ENCODE measurements at regions of chr16 and their contacts with region 1.

Region 1: GRCh38 chr16:30429678-30430427 is at the start of gene DCTPP1:
- DNase-seq: peak; percentile 97
- H3K4me3 Mint-ChIP-seq: no peak within 1 kb of the TSS
- H3K27ac Mint-ChIP-seq: no peak within 1 kb of the TSS
- H3K4me1 Mint-ChIP-seq: peaks cover 39% of the 10 kb centered on the region
- H3K27me3 Mint-ChIP-seq: no peaks in the 10 kb centered on the region
- total RNA-seq, gene DCTPP1: 51.3 to 51.4 TPM

Region 2: DNA sequence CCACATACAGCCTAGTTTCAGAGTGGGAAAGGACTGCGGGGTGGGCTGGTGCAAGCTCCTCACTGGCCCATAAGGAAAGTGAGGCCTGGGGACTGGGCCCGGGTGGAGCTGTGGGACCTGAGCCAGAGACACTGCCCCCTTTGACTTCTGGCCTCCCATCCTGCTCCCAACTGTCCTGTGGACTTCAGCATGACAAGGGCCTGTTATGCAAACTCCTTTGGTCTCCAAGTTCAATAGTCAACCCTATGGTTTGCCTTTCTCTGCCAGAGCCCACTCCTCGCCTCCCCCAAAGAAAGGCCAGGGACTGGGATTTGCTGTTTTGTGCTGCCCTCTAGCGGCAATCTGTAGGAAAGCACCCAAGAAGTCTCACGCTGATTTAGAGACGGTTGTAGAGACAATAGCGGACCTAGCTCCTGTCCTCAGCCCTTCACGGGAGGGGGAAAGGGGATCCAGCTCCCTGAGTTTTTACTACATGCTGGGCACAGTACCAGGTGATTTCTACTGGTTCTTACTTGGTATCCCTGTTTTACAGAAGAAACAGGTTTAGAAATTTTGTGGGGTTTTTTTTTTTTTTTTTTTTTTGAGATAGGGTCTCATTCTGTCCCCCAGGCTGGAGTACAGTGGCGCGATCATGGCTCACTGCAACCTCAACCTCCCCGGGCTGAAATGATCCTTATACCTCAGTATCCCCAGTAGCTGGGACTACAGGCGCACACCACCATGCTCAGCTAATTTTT is 397.6 kb before region 1 on chr16:
- CTCF ChIA-PET with region 1: no interaction called
- POLR2A ChIA-PET with region 1: no interaction called
- DNase-seq: peak; percentile 72
- H3K4me3 Mint-ChIP-seq: no peak overlapping the region
- H3K27ac Mint-ChIP-seq: no peak overlapping the region
- H3K4me1 Mint-ChIP-seq: peaks cover 25% of the 10 kb centered on the region
- H3K27me3 Mint-ChIP-seq: peaks cover 45% of the 10 kb centered on the region

Region 3: DNA sequence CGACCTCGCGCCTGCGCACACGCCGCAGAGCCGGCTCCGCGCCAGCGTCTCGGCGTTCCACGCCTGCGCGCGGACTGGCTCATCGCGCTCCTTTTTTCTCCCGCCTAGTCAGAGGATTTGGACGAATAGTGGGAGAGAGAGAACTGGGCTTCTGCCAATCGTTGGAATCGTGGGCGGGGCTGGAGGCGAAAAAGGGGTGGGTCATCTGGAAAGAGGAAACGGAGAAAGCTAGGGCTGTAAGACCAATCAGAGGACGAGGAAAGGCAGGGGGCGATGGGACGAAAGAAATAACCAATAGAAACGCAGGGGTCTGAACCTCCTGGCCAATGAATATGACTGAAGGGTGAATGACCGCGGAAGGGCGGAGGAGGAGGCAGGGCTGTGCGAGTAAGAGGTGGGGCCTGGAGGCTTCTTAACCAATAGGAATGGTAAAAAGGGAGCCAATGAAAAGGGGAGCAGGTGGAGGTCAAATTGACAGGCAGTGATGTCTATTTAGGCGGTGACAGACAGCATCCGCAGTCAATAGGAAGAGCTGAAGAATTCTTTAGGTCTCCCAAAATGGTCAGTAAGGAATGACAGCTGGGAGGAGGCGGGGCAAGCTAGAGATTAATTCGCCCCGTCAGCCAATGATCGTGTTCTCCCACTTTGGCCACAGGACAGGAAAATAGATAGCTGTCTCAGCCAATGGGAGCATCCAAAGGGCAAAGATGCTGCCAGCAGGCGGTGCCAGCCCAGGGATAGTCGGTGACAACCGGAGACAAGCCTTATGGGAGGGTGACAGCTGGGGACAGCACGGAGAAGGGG is 59.2 kb before region 1 on chr16 and contains the start of gene TBC1D10B:
- CTCF ChIA-PET with region 1: interaction called, 10 read pairs
- POLR2A ChIA-PET with region 1: no interaction called
- DNase-seq: peak; percentile 100
- H3K4me3 Mint-ChIP-seq: peak within 1 kb of the TSS; percentile 86
- H3K27ac Mint-ChIP-seq: peak within 1 kb of the TSS; percentile 90
- H3K4me1 Mint-ChIP-seq: peaks cover 41% of the 10 kb centered on the region
- H3K27me3 Mint-ChIP-seq: no peaks in the 10 kb centered on the region
- total RNA-seq, gene TBC1D10B: 69.2 TPM

Region 4: GRCh38 chr16:30445408-30446202 is 15.8 kb after region 1 on chr16 and contains the start of gene SEPHS2:
- CTCF ChIA-PET with region 1: interaction called, 27 read pairs
- POLR2A ChIA-PET with region 1: interaction called, 25 read pairs
- DNase-seq: peak; percentile 97
- H3K4me3 Mint-ChIP-seq: peak within 1 kb of the TSS; percentile 89
- H3K27ac Mint-ChIP-seq: peak within 1 kb of the TSS; percentile 89
- H3K4me1 Mint-ChIP-seq: peaks cover 56% of the 10 kb centered on the region
- H3K27me3 Mint-ChIP-seq: no peaks in the 10 kb centered on the region
- total RNA-seq, gene SEPHS2: 56.3 to 57.8 TPM

Region 5: DNA sequence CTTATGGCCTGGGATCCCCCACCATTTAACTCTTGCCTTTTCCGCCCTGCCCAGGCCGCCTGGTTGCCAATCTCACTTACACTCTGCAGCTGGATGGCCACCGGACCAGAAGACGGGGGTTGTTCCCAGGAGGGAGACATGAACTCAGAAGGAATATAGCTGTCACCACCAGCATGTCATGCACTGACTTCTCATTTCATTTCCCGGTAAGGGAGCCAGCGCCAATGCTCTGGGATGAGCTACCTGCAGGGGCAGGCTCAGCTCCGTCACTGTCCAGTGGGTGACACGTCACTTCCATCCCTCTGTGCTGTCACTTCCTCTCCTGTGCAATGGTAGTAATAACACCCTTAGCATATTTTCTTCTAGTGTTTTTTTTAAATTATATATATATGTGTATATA is 69.4 kb after region 1 on chr16:
- CTCF ChIA-PET with region 1: interaction called, 10 read pairs
- POLR2A ChIA-PET with region 1: interaction called, 12 read pairs
- DNase-seq: no peak
- H3K4me3 Mint-ChIP-seq: no peak overlapping the region
- H3K27ac Mint-ChIP-seq: no peak overlapping the region
- H3K4me1 Mint-ChIP-seq: peaks cover 16% of the 10 kb centered on the region
- H3K27me3 Mint-ChIP-seq: no peaks in the 10 kb centered on the region

Region 6: DNA sequence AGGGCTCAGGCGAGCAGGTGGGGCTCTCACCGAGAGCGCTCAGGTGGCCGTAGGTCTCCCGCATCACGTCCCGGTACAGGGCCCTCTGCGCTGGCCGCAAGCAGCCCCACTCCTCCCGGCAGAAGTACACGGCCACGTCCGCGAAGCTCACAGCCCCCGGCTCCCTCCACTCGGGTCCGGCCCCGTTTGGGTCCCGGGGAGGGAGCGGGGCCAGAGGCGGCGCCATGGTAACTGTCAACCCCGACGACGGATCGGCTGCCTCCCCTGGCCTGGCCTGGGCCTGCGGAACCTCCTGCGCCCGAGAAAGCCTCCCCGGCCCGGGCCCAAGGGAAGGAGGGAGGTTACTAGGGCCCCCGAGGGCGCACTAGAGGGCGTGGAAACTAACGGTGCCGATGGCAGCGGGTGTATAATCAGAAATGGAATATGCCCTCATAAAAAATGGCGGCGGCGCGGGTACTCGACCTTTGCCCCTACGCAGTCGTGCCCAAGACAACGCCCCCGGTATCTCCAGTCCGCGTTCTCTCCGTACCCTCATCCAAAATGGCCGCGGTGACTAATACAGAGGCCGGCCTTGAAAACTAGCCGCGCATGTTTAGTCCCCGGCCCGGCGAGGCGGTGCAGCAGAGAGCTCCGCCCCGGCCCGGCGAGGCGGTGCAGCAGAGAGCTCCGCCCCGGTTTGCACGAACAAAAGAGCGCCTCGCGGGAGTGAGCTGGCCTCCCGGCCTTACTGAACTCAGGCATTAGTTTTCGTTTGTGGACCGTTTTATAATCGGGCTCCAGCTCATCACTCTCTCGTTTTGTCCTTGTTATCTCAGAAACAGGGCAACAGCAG is 128.3 kb after region 1 on chr16 and contains the start of gene ZNF764:
- CTCF ChIA-PET with region 1: interaction called, 12 read pairs
- POLR2A ChIA-PET with region 1: interaction called, 4 read pairs
- DNase-seq: peak; percentile 99
- H3K4me3 Mint-ChIP-seq: peak within 1 kb of the TSS; percentile 86
- H3K27ac Mint-ChIP-seq: peak within 1 kb of the TSS; percentile 90
- H3K4me1 Mint-ChIP-seq: peaks cover 51% of the 10 kb centered on the region
- H3K27me3 Mint-ChIP-seq: no peaks in the 10 kb centered on the region
- total RNA-seq, gene ZNF764: 16.0 to 16.8 TPM

Region 7: DNA sequence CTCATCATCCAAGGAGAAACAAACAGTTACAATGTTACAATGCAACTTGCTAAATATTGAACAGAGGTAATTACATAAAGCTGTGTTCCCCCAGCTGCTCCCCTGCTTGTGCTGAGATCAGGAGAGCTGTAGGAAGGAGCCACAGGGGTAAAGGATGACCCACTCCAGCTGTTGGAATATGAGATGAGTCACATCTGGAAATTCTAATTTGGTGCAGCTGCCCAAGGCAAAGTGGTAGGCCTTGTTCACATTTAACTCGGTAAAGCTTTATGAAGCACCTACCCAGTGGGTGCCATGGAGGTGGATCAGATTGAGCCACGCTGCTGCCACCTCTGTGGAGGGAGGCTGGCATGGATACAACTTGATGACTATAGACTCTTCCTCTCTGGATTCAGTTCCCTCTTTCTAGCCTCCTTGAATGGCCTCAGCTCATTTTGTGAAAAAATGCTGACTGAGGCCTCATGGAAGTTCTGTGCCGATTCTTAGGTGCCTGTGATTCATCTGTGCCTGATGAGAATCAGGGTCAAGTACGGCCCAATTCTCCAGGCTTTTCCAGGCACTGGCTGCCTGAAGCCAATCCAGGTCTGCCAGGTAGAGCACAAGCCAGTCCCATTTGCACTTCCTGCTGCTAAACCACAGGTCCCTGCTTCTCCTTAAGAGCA is 172.9 kb after region 1 on chr16:
- CTCF ChIA-PET with region 1: interaction called, 39 read pairs
- POLR2A ChIA-PET with region 1: interaction called, 8 read pairs
- DNase-seq: no peak
- H3K4me3 Mint-ChIP-seq: no peak overlapping the region
- H3K27ac Mint-ChIP-seq: no peak overlapping the region
- H3K4me1 Mint-ChIP-seq: peaks cover 11% of the 10 kb centered on the region
- H3K27me3 Mint-ChIP-seq: no peaks in the 10 kb centered on the region

Region 8: DNA sequence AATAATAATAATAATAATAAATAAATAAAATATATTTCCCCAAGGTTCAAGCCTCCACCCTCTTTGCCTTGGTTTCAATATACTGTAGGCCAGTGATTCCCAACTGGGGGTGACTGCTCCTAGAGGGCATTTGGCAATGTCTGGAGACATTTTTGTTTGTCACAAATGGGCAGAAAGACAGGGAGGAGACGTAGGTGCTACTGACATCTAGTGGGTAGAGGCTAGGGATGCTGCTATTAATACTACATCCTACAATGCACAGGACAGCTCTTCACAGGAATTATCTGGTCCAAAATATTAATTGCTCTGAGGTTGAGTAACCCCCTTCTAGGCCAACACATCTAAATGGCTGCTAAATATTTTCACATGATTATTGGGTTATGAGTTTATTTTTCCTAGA is 208.1 kb after region 1 on chr16:
- CTCF ChIA-PET with region 1: interaction called, 13 read pairs
- POLR2A ChIA-PET with region 1: interaction called, 4 read pairs
- DNase-seq: peak; percentile 38
- H3K4me3 Mint-ChIP-seq: no peak overlapping the region
- H3K27ac Mint-ChIP-seq: no peak overlapping the region
- H3K4me1 Mint-ChIP-seq: peaks cover 19% of the 10 kb centered on the region
- H3K27me3 Mint-ChIP-seq: no peaks in the 10 kb centered on the region